Natural killer cell (primary cell): ENCODE measurements at regions of chr18 and their contacts with region 1.

Region 1: DNA sequence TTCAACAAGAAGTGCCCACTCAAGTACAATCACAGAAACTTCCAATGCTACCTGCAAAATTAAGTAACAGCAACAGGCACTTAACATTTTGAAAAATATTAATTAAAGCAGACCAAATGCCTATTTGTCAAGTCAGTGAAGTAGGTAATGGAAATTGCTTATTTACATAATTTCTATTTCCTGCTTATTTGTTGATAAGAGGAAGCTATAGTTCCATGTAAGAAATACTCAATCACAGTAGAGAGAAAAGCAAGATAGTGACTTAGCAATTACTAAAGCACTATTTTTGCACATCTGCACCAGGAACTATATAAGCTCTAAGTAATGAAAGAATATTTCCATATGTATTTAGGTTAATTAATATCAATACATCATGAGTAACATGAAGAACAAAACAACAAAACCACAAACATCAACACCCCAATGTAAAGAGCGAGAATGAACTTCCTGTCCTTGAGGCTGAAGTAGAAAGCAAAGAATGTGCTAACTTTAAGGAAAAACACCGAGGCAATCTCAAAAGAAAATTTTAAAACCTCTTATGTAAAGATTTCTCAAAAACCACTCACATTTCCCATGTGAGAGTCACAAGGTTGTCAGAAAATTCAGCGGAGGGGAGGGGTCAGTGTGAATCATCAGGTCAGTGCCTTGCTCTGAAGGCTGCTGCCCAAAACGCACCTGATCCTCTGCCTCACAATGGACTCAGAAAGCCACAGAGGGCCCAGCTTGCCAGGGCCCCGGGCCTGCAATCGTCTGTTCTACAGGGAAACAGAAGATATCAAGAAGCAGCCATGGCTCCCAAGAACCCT is 12.5 kb downstream of the NPC1 start:
- DNase-seq: peak; percentile 49 to 65
- ATAC-seq: peak; percentile 52 to 67 (median 57)
- H3K4me3 ChIP-seq: no peak overlapping the region
- H3K4me3 Mint-ChIP-seq: peak overlapping the region; percentile 91
- H3K27ac ChIP-seq: peak overlapping the region; percentile 75
- H3K27ac Mint-ChIP-seq: peak overlapping the region; percentile 94 to 99
- H3K4me1 ChIP-seq: peaks cover 67% of the 10 kb centered on the region
- H3K4me1 Mint-ChIP-seq: peaks cover 68 to 76% of the 10 kb centered on the region in 2 donors
- H3K27me3 ChIP-seq: no peaks in the 10 kb centered on the region
- H3K27me3 Mint-ChIP-seq: no peaks in the 10 kb centered on the region
- CTCF ChIP-seq: no peak

Region 2: DNA sequence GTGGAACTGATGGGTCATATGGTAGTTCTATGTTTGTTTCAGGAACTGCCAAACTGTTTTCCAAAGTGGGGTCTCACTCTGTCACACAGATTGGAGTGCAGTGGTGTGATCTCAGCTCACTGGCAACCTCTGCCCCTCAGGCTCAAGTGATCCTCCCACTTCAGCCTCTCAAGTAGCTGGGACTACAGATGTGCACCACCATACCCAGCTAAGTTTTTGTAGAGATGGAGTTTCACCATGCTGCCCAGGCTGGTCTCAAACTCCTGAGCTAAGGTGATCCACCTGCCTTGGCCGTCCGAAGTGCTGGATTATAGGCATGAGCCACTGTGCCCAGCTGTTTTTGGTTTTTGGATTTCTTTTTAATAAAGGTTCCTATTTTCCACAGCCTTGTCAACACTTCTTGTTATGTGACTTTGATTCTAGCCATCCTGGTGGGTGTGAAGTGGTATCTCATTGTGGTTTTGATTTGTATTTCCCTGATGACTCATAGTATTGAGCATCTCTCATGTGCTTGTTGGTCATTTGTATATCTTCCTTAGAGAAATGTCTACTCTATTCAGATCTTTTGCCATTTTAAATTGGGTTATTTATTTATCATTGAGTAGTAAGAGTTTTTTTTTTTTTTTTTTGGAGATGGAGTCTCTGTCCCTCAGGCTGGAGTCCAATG is 10.3 kb before region 1 on chr18:
- intact Hi-C with region 1: loop called (anchors 1 kb)
- DNase-seq: peak in 1 of 2 donors; percentile 61
- ATAC-seq: peak; percentile 88 to 97 (median 90)
- H3K4me3 ChIP-seq: no peak overlapping the region
- H3K4me3 Mint-ChIP-seq: peak overlapping the region; percentile 10
- H3K27ac ChIP-seq: peak overlapping the region; percentile 8
- H3K27ac Mint-ChIP-seq: peak overlapping the region; percentile 85 to 99
- H3K4me1 ChIP-seq: peaks cover 14% of the 10 kb centered on the region
- H3K4me1 Mint-ChIP-seq: peaks cover 23 to 36% of the 10 kb centered on the region in 2 donors
- H3K27me3 ChIP-seq: no peaks in the 10 kb centered on the region
- H3K27me3 Mint-ChIP-seq: no peaks in the 10 kb centered on the region
- CTCF ChIP-seq: no peak